Testis (tissue), 5 donors: ENCODE measurements at regions of chr1 and their contacts with region 1.

Region 1: GRCh38 chr1:999725-1000356 is at the start of gene HES4:
- DNase-seq: peak; percentile 90
- H3K4me3 ChIP-seq: peak within 1 kb of the TSS; percentile 56 to 64
- H3K27ac ChIP-seq: peak within 1 kb of the TSS; percentile 87 to 89
- H3K4me1 ChIP-seq: peaks cover 12% of the 10 kb centered on the region
- H3K27me3 ChIP-seq: no peaks in the 10 kb centered on the region
- CTCF ChIP-seq: no peak
- POLR2A ChIP-seq: no peak
- total RNA-seq, gene HES4: 26.4 to 27.5 TPM

Region 2: GRCh38 chr1:1059494-1060280 is 59.8 kb after region 1 on chr1:
- intact Hi-C with region 1: loop called (anchors 10 kb)
- DNase-seq: peak; percentile 93
- H3K4me3 ChIP-seq: peak overlapping the region; percentile 44 to 62
- H3K27ac ChIP-seq: no peak overlapping the region
- H3K4me1 ChIP-seq: peaks cover 17% of the 10 kb centered on the region
- H3K27me3 ChIP-seq: no peaks in the 10 kb centered on the region
- CTCF ChIP-seq: peak in 1 of 3 experiments; percentile 2
- POLR2A ChIP-seq: no peak

Region 3: DNA sequence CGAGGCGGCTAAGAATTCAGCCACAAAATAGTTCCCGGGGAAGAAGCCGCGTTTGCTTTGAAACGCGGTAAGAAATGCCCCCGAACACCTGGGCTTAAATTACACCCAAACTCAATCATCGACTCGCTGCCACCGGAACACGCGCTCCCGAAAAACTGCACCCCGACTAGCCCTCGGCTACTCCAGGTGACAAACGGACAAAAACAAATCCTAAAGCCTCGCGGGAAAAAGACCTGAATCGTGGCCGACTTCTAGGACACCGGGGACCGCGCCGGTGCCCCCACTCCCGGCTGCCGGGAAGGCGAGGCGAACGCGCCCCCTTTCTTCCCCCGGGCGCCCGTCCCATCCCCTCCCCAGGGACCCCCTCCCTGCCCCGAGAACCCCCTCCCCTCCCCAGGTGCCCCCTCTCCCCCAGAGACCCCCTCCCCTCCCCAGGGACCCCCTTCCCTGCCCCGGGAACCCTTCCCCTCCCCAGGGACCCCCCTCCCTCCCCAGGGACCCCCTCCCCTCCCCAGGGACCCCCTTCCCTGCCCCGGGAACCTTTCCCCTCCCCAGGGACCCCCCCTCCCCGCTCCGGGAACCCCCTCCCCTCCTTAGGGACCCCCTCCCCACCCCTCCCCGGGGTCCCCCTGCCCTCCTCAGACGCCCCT is 115.4 kb after region 1 on chr1:
- intact Hi-C with region 1: no loop called
- DNase-seq: no peak
- H3K4me3 ChIP-seq: peak overlapping the region; percentile 81 to 92
- H3K27ac ChIP-seq: peak overlapping the region; percentile 59 to 83
- H3K4me1 ChIP-seq: no peaks in the 10 kb centered on the region
- H3K27me3 ChIP-seq: no peaks in the 10 kb centered on the region
- CTCF ChIP-seq: no peak
- POLR2A ChIP-seq: no peak

Region 4: GRCh38 chr1:1144122-1144842 is 144.4 kb after region 1 on chr1:
- intact Hi-C with region 1: no loop called
- DNase-seq: no peak
- H3K4me3 ChIP-seq: no peak overlapping the region
- H3K27ac ChIP-seq: no peak overlapping the region
- H3K4me1 ChIP-seq: no peaks in the 10 kb centered on the region
- H3K27me3 ChIP-seq: no peaks in the 10 kb centered on the region
- CTCF ChIP-seq: no peak
- POLR2A ChIP-seq: no peak